ENCODE measurements at regions of chr1 and their contacts with region 1.

Region 1: DNA sequence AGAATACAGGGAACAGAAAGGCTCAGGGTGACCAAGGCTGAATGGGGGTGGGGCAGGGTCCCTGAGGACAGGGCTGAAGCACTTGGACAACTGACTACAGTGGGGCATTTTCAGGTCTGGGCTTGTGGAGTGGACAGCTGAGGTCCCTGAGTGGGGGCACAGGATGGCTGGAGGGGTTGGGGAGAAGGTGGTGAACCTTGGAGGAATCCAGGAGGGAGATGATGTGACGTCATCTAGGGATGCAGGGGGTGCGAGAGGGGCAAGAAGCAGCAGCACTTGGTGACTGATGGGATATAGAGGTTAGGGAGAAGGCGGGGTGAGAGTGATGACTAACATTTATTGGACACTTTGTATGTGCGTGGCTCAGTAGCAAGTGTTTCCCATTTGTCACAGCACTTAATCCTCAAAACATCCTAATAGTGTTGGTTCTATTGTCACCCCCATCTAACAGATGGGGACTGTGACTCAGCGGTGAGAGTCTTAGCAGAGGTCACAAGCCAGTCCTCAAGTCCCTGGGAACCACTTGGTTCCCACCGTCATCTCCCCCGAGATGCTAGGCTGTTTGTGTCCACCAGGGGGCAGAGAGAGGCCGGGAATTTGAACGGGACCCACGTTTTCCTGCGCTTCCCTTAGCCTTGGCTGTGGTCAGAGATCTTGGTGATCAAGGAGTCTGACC is 27.9 kb upstream of the BMP8B start:
- DNase-seq: peak; percentile 85 to 97 (median 88)
- H3K4me3 ChIP-seq: peak overlapping the region in 2 of 3 experiments; percentile 32 to 61
- H3K4me3 Mint-ChIP-seq: peak overlapping the region; percentile 68
- H3K27ac ChIP-seq: peak overlapping the region; percentile 73 to 83
- H3K27ac Mint-ChIP-seq: peak overlapping the region; percentile 81 to 95 (median 91)
- H3K4me1 ChIP-seq: peaks cover 25 to 29% of the 10 kb centered on the region in 2 donors
- H3K4me1 Mint-ChIP-seq: peaks cover 24% of the 10 kb centered on the region
- H3K27me3 ChIP-seq: no peaks in the 10 kb centered on the region
- H3K27me3 Mint-ChIP-seq: peaks cover 1 to 4% (median 3%) of the 10 kb centered on the region in 3 donors
- CTCF ChIP-seq: peak; percentile 83

Region 2: GRCh38 chr1:39845275-39846116 is 28.9 kb after region 1 on chr1:
- intact Hi-C with region 1: loop called in 1 of 2 experiments (anchors 2 kb)
- DNase-seq: peak; percentile 98 to 99 (median 99)
- H3K4me3 ChIP-seq: peak overlapping the region in 1 of 3 experiments; percentile 43
- H3K4me3 Mint-ChIP-seq: peak overlapping the region; percentile 28 to 75
- H3K27ac ChIP-seq: peak overlapping the region; percentile 75 to 89
- H3K27ac Mint-ChIP-seq: peak overlapping the region; percentile 93 to 99 (median 94)
- H3K4me1 ChIP-seq: peaks cover 56 to 60% of the 10 kb centered on the region in 2 donors
- H3K4me1 Mint-ChIP-seq: peaks cover 55% of the 10 kb centered on the region
- H3K27me3 ChIP-seq: no peaks in the 10 kb centered on the region
- H3K27me3 Mint-ChIP-seq: no peaks in the 10 kb centered on the region
- CTCF ChIP-seq: no peak

Region 3: DNA sequence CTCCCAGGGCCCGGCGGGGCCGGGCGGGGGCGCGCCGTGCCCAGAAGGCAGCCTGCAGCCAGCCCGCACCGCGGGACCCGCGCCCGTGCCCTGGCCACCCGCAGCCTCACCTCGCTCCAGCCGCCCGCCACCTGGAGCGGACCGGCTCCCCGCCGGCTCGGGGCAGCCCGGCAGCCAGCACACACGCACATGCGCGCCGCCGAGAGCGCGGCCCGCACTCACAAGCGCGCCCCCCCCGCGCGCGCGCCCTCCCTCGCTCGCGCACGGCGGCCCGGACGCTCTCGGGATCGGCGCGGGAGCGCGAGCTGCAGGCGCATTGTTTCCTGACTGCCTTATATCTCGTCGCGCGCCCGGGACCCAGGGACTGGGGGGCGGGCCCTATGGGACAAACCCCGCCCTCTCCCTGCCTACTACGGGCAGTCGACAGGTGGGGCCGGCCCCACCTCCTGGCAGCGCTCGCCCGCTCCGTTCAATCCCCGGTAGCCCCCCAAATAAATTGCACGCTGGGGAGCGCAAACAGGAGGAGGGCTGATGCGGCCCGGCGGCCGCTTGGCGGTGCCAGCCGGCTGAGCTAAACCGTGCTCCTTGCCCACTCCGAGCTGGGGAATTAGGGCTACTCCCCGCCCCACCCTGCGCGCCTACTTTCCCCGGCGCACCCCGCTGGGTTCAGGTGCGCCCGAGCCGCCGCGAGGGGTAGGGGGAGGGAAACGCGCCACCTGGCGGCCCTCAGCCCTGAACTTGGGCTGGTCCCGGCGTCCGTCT is 85.3 kb after region 1 on chr1 and contains the start of gene MYCL:
- intact Hi-C with region 1: loop called (anchors 5 kb)
- DNase-seq: peak; percentile 62 to 79 (median 76)
- H3K4me3 ChIP-seq: peak within 1 kb of the TSS; percentile 85 to 91 (median 89)
- H3K4me3 Mint-ChIP-seq: peak within 1 kb of the TSS; percentile 93 to 98
- H3K27ac ChIP-seq: peak within 1 kb of the TSS; percentile 50 to 82
- H3K27ac Mint-ChIP-seq: peak within 1 kb of the TSS; percentile 30 to 88 (median 81)
- H3K4me1 ChIP-seq: peaks cover 69 to 79% of the 10 kb centered on the region in 2 donors
- H3K4me1 Mint-ChIP-seq: peaks cover 72% of the 10 kb centered on the region
- H3K27me3 ChIP-seq: no peaks in the 10 kb centered on the region
- H3K27me3 Mint-ChIP-seq: peaks cover 5 to 20% (median 8%) of the 10 kb centered on the region in 3 donors
- CTCF ChIP-seq: peak; percentile 78
- polyA plus RNA-seq, gene MYCL: 24.8 to 84.0 (median 74.7) TPM

Region 4: GRCh38 chr1:39973503-39974135 is 157.1 kb after region 1 on chr1:
- intact Hi-C with region 1: loop called (anchors 2 to 5 kb)
- DNase-seq: peak; percentile 66 to 78 (median 71)
- H3K4me3 ChIP-seq: no peak overlapping the region
- H3K4me3 Mint-ChIP-seq: peak overlapping the region in 1 of 2 donors; percentile 39
- H3K27ac ChIP-seq: no peak overlapping the region
- H3K27ac Mint-ChIP-seq: peak overlapping the region in 3 of 7 donors; percentile 8 to 27 (median 12)
- H3K4me1 ChIP-seq: peaks cover 20 to 26% of the 10 kb centered on the region in 2 donors
- H3K4me1 Mint-ChIP-seq: peaks cover 30% of the 10 kb centered on the region
- H3K27me3 ChIP-seq: no peaks in the 10 kb centered on the region
- H3K27me3 Mint-ChIP-seq: peaks cover 0 to 2% (median 0%) of the 10 kb centered on the region in 3 donors
- CTCF ChIP-seq: peak; percentile 95

Measured in CD14-positive monocyte (primary cell).